ENCODE measurements at regions of chr9 and their contacts with region 1.

Region 1: DNA sequence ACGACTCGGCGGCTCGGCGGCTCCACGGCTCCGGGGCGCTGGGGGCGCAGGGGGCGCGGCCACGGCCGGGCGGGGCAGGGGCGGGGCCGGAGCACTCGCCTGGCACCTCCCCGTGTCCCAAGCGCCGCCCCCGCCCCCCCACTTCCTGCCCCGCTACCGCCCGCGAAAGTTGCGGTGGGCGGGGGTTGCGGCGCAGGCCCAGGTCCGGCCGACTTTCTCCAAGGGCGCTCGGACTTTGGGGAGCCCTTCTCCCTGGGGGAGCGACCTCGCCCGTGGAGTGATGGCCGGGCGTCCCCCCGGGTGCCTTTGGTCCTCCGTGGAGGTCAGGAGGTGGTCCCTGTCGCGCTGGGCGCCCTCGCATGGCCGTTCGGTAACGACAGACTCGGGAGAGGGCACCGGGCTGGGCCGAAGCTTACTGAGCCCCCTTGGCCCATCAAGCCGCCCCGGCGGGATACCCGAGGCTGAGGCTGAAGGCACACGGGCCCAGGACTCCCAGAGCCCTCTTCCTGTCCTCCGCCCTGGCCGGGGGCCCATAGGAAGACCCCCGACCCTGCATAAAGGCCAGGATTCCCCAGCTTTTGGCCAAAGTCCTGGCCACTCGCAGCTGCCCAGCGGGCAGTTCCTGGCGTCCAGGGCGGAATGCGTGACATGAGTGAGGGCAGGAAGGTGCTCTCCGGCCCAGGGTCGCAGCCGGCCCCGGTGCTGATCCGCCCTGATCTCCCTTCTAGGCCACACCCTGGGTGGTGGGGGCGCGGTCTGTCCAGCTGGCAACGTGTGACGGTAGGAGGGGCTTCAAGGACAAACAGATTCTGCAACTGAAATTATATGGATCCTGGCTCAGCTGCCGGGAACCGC is 883 bp upstream of the VAV2 start:
- DNase-seq: peak; percentile 90
- CTCF ChIP-seq: peak; percentile 53

Region 2: DNA sequence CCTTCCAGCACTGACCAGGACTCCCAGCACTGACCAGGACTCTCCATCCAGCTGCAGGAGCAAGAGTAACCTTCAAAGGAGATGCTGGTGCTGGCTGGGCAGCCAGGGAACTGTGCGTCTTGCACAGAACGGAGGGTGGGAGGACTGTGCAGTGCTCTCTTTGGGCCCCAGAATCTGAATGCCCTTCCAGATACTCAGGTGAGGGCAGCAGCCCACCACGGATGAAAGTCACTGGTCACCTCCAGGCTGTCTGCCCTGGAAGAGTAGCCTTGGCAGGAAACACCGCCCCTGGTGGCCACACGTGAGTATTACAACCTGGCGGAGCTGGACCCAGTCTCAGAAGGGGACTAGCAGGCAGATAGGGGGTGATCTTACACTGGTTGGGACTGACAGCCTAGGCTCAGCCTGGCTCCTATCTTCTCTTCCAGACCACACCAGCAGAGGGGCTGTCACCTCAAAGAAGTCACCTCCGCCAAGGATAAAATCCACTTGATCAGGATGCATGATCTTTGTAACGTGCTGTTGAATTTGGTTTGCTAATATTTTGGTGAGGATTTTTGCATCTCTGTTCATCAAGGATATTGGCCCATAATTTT is 250.1 kb before region 1 on chr9:
- CTCF ChIA-PET with region 1: interaction called, 12 read pairs
- POLR2A ChIA-PET with region 1: no interaction called
- DNase-seq: peak; percentile 89
- CTCF ChIP-seq: peak; percentile 97

Region 3: GRCh38 chr9:133782157-133783130 is 210.6 kb before region 1 on chr9:
- CTCF ChIA-PET with region 1: interaction called, 186 read pairs
- POLR2A ChIA-PET with region 1: no interaction called
- DNase-seq: peak; percentile 76
- CTCF ChIP-seq: peak; percentile 88

Region 4: DNA sequence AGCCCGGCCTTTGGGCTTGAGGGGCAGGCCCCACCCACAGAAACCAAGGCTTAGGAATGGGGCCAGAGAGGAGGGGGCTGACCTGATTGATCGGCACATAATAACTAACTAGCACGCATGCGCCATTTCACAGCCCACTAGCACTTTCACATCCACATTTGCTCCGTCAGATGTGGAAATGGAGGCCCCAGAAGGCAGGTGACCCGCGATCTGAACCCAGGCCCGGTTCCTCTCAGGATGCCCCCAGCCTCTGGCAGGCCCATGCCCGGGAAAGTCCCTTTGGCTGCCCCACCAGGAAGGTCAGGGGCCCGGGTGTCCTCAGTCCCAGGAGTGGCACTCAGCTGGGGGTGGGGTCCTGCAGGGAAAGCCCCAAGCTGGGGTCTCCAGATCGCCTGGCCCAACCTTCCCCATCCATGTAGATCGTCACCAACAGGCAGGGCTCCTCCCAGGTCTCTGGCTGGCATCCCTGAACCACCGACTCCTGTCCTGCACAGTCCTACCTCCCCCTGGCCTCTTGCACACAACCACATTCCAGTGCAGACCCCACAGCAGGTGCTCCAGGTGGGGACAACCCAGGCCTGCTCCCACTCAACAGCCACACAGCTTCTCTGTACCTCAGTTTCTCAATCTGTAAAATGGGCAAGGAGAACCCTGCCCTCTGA is 47.6 kb before region 1 on chr9:
- CTCF ChIA-PET with region 1: interaction called, 18 read pairs
- POLR2A ChIA-PET with region 1: no interaction called
- DNase-seq: peak; percentile 89
- CTCF ChIP-seq: no peak

Region 5: DNA sequence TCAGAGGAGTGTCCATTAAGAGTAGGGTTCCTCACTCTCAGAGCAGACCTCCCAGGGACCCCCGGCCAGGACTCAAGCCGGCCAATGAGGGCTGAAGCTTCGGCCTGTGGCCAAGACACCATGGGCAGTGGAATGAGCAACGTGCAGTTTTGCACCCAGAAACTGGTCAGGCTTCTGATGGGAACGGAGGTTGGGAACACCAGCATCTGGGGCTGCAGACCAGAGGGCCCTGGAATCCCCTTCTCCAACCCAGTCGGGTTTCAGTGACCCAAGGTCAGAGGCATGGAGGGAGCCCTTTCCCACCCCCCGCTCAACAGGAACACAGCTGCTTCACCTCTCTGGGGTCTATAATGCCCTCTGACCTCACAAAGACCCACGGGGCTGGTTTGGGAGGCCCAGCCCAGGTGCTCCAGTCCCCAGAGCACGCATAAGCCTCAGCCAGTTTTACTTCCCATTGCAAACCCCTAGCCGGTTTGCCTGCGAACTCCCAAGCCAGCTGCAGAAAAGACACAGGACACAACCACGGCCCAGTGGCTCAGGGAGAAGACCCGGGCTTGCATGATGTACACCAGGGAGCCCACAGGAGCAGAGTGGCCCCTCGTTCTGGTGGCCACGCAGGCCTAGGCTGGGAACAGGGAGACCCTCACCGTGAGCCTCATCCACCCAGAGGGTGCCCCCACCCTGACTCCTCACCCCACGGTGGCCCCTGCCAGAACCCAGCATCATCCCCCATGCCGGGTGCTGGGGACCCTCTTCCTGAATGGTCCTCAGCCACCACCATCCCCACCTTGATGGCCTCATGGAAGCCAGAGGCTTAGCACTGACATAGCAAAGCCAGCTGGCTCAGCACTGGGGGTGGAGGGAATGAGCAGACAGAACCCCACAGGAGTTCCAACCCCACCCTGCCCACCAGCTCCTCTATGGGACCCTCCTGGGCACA is 31.5 kb before region 1 on chr9:
- CTCF ChIA-PET with region 1: interaction called, 23 read pairs
- POLR2A ChIA-PET with region 1: no interaction called
- DNase-seq: no peak
- CTCF ChIP-seq: no peak

Region 6: DNA sequence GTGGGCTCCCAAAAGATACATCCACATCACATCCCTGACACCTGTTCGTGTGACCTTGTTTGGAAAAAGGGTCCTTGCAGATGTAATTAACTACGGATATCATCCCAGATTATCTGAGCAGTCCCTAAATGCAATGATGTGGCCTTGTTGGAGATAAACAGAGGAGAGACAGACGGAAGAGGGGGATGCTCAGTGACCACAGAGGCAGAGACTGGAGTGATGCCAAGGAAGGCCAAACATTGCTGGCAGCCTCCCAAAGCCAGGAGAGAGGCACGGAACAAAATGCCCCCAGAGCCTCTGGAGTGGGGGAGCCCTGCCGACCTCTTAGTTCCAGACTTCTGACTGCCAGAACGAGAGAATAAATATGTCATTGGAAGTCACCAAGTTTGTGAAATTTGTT is 14.1 kb after region 1 on chr9:
- CTCF ChIA-PET with region 1: interaction called, 38 read pairs
- POLR2A ChIA-PET with region 1: no interaction called
- DNase-seq: no peak
- CTCF ChIP-seq: no peak

Region 7: DNA sequence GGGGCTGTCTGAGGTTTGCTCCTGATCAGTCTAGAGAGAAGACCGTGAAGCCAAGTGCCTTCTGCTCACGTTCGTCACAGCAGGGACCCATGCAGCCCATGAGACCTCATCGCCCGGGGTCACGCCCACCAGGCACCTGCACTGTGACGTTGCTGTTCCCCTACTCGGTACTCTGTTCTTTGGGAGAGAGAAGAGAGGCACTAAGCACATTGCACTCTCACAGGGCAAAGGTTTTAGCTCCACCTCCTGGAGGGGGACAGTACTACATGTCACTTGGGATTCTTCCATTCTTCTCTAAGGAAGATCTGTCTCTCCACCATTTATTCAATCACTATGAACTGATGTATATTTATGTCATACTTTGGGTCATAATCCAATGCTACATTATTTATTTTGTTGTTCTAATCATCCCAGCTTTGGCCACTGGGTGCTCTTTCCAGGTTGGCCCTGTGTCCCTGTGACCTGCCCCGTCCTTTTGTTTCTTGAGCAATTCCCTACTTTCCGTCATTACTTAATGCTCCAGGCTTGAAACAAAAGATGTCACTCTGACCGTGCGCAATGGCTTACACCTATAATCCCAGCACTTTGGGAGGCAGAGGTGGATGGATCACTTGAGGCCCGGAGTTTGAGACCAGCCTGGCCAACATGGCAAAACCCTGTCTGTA is 106.2 kb after region 1 on chr9:
- CTCF ChIA-PET with region 1: interaction called, 12 read pairs
- POLR2A ChIA-PET with region 1: no interaction called
- DNase-seq: peak; percentile 75
- CTCF ChIP-seq: peak; percentile 64

Region 8: GRCh38 chr9:134158753-134159392 is 165.9 kb after region 1 on chr9:
- CTCF ChIA-PET with region 1: no interaction called
- POLR2A ChIA-PET with region 1: no interaction called
- DNase-seq: no peak
- CTCF ChIP-seq: no peak

Measured in GM10248 (cell line).